Activated CD8-positive, alpha-beta T cell treated with anti-CD3 and anti-CD28 coated beads, Interleukin-2, amount 10 ng/mL, durations not matched to agents 7 days and 5 days (primary cell): ENCODE measurements at regions of chr14 and their contacts with region 1.

Region 1: DNA sequence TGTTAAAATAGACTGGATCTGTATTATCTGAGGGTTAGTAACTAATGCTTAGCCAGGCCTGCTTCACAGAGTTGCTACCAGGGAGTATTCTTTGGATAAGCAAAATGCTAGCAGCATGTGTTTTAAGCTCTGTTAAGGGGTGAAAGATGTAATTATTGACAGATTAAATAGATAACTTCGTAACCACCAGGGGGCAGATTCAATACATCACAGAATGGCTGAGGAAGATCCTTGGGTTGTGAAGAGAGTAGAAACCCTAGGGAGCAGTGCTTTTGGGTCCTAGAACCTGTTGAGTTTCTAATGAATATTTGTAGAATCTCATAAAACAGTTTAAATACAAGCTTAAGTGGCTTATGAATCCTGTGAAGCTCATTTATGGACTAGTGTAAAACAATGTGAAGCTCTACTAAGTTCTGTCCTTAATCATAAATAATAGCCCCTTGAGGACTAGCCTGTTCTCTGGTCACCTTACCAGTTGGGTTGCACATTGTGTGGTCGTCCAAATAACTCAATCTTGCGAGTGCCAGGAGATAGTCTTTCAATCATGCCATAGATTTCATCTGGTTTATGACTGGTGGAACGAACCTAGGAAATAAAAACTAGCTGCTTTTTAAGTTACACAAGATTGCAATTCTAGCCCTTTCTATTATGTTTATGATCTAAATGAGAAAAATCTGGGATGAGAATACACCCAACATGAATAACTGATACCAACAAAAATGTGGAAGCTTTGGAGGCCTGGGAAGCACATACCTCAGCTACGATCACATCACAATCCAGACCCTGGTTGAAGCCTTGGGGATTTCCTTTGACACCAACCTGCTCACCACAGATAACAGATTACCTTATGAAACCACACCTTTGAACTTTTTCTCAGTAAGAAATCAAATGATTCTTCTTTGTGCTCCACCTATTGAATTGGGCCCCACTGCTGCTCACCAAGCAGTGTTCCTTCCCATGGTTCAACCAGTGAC is 12.3 kb downstream of the METTL3 start:
- DNase-seq: peak; percentile 53
- ATAC-seq: peak; percentile 59
- H3K4me3 Mint-ChIP-seq: no peak overlapping the region
- H3K27ac Mint-ChIP-seq: peak overlapping the region; percentile 40
- H3K4me1 Mint-ChIP-seq: peaks cover 21% of the 10 kb centered on the region
- H3K27me3 Mint-ChIP-seq: no peaks in the 10 kb centered on the region

Region 2: GRCh38 chr14:21326972-21327371 is 171.9 kb before region 1 on chr14:
- CTCF ChIA-PET with region 1: no interaction called
- POLR2A ChIA-PET with region 1: no interaction called
- DNase-seq: no peak
- ATAC-seq: no peak
- H3K4me3 Mint-ChIP-seq: no peak overlapping the region
- H3K27ac Mint-ChIP-seq: no peak overlapping the region
- H3K4me1 Mint-ChIP-seq: no peaks in the 10 kb centered on the region
- H3K27me3 Mint-ChIP-seq: peaks cover 12% of the 10 kb centered on the region

Region 3: DNA sequence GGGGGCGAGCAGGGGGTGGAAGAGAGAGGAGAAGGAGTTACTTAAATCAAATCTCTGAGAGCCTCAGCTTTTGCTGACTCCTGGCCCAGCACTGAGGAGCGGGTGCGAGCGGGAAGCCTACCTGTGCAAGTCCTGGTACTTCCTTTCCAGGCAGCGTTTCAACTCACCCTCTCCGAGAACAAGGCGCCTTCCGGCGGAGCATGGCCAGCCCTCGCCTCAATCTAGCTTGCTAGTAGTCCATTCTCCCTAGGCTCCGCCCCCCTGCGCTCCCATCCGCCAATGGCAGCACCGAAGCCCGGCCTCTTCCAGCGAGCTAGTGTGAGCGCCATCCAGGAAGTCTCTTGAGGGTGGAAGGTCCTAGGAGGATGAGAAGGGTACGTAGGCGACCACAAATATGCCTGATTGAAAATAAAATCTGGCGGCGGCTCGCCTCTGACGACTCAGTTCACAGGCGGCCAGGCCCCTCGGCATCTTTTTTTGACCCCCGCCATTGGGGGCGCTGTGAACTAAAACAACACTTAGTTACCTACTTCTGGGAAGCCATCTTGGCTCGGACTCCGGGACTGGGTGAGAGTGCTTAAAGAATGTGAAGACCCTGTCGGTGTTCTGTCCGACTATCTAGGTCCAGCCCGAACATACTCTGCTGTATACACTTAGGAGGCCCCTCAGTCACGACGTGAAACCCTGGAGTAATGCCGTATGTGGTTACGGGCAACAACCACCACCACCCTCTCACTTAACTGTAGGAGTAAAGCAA is 42.8 kb before region 1 on chr14 and contains the start of gene CHD8:
- CTCF ChIA-PET with region 1: interaction called, 10 read pairs
- POLR2A ChIA-PET with region 1: interaction called, 3 read pairs
- DNase-seq: peak; percentile 100
- ATAC-seq: peak; percentile 99
- H3K4me3 Mint-ChIP-seq: peak within 1 kb of the TSS; percentile 95
- H3K27ac Mint-ChIP-seq: peak within 1 kb of the TSS; percentile 98
- H3K4me1 Mint-ChIP-seq: peaks cover 32% of the 10 kb centered on the region
- H3K27me3 Mint-ChIP-seq: no peaks in the 10 kb centered on the region
- total RNA-seq, gene CHD8: 116 to 119 TPM

Region 4: GRCh38 chr14:21486640-21487087 is 12.2 kb before region 1 on chr14:
- CTCF ChIA-PET with region 1: interaction called, 25 read pairs
- POLR2A ChIA-PET with region 1: interaction called, 4 read pairs
- DNase-seq: no peak
- ATAC-seq: no peak
- H3K4me3 Mint-ChIP-seq: no peak overlapping the region
- H3K27ac Mint-ChIP-seq: no peak overlapping the region
- H3K4me1 Mint-ChIP-seq: no peaks in the 10 kb centered on the region
- H3K27me3 Mint-ChIP-seq: no peaks in the 10 kb centered on the region

Region 5: DNA sequence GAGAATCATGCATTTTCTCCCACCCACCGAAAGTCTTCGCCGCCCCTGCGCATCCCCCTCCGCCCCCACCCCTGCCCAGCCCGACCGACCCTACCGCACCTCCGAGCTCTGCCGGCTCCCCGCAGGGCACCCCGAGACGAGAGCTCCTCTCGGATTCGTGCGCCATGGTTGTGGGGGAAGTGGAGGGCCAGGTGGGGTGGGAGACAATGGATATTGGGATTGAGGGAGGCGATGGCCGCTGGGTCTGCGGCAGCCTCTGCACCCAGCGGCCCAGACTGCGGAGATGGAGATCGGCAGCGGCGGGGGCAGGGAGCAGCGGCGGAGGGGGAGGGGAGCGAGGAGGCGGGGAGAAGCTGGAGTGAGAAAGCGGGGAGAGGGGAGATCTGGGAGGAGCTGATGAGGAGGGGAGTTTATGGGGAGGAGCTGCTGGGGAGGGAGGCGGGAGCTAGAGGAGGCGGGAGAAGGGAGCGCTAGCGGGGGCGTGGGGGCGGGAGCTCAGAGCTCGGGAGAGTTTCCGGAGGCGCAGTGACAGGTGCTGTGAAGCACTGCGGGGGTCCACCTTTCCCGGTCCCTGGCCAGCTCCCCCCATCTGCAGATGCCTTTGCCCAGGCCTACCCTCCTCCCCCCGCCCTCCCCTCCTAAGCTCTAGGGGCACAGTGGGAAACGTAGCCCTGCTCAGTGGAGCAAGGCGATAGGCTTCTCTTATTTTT is 27.3 kb after region 1 on chr14 and contains the start of gene SALL2:
- CTCF ChIA-PET with region 1: interaction called, 33 read pairs
- POLR2A ChIA-PET with region 1: interaction called, 3 read pairs
- DNase-seq: peak; percentile 70
- ATAC-seq: peak; percentile 86
- H3K4me3 Mint-ChIP-seq: peak within 1 kb of the TSS; percentile 72
- H3K27ac Mint-ChIP-seq: peak within 1 kb of the TSS; percentile 13
- H3K4me1 Mint-ChIP-seq: peaks cover 17% of the 10 kb centered on the region
- H3K27me3 Mint-ChIP-seq: peaks cover 7% of the 10 kb centered on the region
- total RNA-seq, gene SALL2: 1.9 to 2.0 TPM

Region 6: GRCh38 chr14:21557084-21557901 is 58.5 kb after region 1 on chr14:
- CTCF ChIA-PET with region 1: interaction called, 86 read pairs
- POLR2A ChIA-PET with region 1: interaction called, 9 read pairs
- DNase-seq: peak; percentile 87
- ATAC-seq: peak; percentile 76
- H3K4me3 Mint-ChIP-seq: peak overlapping the region; percentile 39
- H3K27ac Mint-ChIP-seq: no peak overlapping the region
- H3K4me1 Mint-ChIP-seq: peaks cover 6% of the 10 kb centered on the region
- H3K27me3 Mint-ChIP-seq: no peaks in the 10 kb centered on the region